PC-9 (cell line): ENCODE measurements at regions of chr10 and their contacts with region 1.

Region 1: DNA sequence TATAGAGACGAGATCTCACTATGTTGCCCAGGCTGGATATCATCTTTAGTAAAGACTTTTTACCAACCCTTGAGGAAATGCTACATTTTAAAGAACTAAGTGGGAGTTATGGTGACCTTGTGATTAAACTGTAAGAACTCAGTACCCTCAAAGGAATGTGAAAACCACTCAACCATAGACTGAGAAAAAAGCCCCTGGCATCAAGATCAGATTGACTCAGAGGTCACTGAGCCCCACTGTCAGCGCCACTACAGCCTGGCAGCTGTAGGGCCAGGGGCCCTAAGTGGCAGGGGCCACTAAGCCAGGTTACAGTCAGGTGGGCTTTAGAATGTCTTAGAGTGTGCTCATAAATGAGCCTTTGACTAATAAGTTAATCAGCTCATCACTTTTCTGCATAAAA is 55.9 kb downstream of the APBB1IP start:
- DNase-seq: no peak
- H3K4me3 ChIP-seq: no peak overlapping the region
- H3K27ac ChIP-seq: no peak overlapping the region
- H3K4me1 ChIP-seq: no peaks in the 10 kb centered on the region
- H3K27me3 ChIP-seq: no peaks in the 10 kb centered on the region
- CTCF ChIP-seq: no peak

Region 2: GRCh38 chr10:27019827-27020226 is 525.8 kb after region 1 on chr10:
- CTCF ChIA-PET with region 1: no interaction called
- POLR2A ChIA-PET with region 1: interaction called, 12 read pairs
- intact Hi-C with region 1: no loop called
- DNase-seq: no peak
- H3K4me3 ChIP-seq: no peak overlapping the region
- H3K27ac ChIP-seq: no peak overlapping the region
- H3K4me1 ChIP-seq: no peaks in the 10 kb centered on the region
- H3K27me3 ChIP-seq: no peaks in the 10 kb centered on the region
- CTCF ChIP-seq: no peak